ENCODE measurements at regions of chr14 and their contacts with region 1.

Region 1: GRCh38 chr14:89053303-89053702 is 228.9 kb downstream of the TTC8 start:
- DNase-seq: no peak
- ATAC-seq: no peak
- H3K4me3 Mint-ChIP-seq: no peak overlapping the region
- H3K27ac Mint-ChIP-seq: no peak overlapping the region
- H3K4me1 Mint-ChIP-seq: peaks cover 4% of the 10 kb centered on the region
- H3K27me3 Mint-ChIP-seq: peaks cover 4% of the 10 kb centered on the region

Region 2: DNA sequence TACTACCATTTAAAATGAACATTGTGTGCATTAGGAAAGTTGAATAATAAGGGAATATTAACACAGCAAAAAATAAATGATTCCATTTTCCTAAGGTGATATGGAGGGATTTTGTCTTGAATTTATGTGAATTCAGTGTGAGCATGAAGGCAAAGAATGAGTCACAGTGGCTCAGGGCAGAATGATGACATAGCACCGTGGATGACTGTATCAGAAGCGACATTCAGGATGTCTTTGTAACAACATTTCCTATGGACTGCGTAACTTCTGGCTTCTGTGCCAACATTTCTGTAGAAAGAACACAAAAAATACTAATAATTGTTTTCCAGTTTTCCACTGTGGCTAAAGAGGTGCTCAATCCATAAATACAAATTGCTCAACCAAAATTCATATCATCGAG is 174.3 kb before region 1 on chr14:
- CTCF ChIA-PET with region 1: no interaction called
- POLR2A ChIA-PET with region 1: no interaction called
- intact Hi-C with region 1: no loop called
- DNase-seq: no peak
- ATAC-seq: no peak
- H3K4me3 Mint-ChIP-seq: no peak overlapping the region
- H3K27ac Mint-ChIP-seq: no peak overlapping the region
- H3K4me1 Mint-ChIP-seq: no peaks in the 10 kb centered on the region
- H3K27me3 Mint-ChIP-seq: no peaks in the 10 kb centered on the region

Region 3: GRCh38 chr14:88929656-88930425 is 123.5 kb before region 1 on chr14:
- CTCF ChIA-PET with region 1: no interaction called
- POLR2A ChIA-PET with region 1: no interaction called
- intact Hi-C with region 1: no loop called
- DNase-seq: peak; percentile 6
- ATAC-seq: no peak
- H3K4me3 Mint-ChIP-seq: no peak overlapping the region
- H3K27ac Mint-ChIP-seq: no peak overlapping the region
- H3K4me1 Mint-ChIP-seq: no peaks in the 10 kb centered on the region
- H3K27me3 Mint-ChIP-seq: peaks cover 18% of the 10 kb centered on the region

Region 4: DNA sequence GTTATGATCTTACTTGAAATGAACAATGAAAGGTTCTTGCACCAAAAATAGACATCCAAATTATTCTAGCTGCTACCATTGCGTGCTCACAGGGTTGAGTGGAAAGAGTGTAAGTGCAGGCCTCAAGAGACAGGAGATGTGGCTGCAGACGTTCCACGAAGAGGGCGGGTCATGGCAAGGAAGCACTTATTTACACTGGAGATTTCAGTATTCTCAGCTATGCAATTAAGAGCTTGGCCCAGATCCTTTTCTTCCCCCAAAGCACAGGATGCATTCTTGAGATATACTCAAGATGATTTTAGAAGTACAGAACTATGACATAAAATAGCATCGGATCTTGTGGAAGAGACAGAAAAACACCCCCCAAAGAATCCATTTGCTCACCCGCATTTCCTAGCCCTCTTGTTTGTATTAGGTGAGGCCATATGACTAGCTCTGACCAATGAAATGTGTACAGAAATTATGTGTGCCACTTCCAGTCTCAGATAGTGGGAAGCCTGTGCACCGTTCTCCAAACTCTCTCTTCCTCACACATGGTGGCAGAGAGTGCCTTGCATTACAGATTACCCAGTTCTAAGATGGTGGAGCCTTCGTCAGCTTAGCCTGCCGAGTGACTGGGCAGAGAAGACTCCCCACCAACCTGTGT is 32.6 kb after region 1 on chr14:
- CTCF ChIA-PET with region 1: no interaction called
- POLR2A ChIA-PET with region 1: interaction called, 13 read pairs
- intact Hi-C with region 1: no loop called
- DNase-seq: no peak
- ATAC-seq: no peak
- H3K4me3 Mint-ChIP-seq: no peak overlapping the region
- H3K27ac Mint-ChIP-seq: no peak overlapping the region
- H3K4me1 Mint-ChIP-seq: no peaks in the 10 kb centered on the region
- H3K27me3 Mint-ChIP-seq: peaks cover 2% of the 10 kb centered on the region

Measured in activated CD4-positive, alpha-beta T cell treated with anti-CD3 and anti-CD28 coated beads for 36 hours (primary cell).